ENCODE measurements at regions of chr11 and their contacts with region 1.

Region 1: DNA sequence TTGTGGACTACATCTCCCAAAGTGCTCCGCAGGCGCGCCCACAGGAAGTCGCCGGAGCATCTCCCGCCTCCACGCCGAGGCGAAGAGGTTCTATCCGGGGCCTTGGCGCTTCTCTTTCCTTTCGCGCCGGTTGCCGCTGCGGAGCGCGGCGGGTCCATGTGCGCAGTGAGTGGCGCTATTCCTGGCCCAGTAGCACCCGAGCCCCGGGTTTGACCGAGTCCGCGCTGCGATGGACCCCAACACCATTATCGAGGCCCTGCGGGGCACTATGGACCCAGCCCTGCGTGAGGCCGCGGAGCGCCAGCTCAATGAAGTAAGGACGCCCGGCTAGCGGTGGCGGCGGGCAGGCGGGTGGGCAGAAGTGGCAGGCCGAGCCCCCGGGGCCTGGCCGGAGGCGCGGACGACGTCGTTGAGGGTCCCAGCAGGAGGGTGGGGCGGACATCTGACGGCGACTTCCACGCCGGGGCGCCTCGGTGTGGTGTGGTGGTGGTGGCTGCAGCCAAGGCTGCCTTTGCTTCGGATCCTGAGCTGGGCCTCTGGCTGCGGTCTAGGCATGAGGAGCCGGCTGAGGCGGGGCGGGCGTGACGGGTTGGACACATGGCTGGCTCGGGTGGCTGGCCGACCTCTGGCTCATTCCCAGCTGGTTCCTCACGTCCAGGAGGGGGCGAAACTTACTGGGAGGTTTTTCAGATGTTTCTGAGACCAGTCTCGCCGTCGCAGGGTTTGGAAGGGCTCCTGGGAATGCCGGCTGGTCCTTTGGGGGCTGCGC is at the start of gene IPO7:
- DNase-seq: peak; percentile 70 to 95
- H3K4me3 ChIP-seq: peak within 1 kb of the TSS; percentile 86 to 97
- H3K27ac ChIP-seq: peak within 1 kb of the TSS; percentile 94 to 99
- H3K4me1 ChIP-seq: peaks cover 0 to 36% of the 10 kb centered on the region in 2 donors
- H3K27me3 ChIP-seq: no peaks in the 10 kb centered on the region
- CTCF ChIP-seq: peak; percentile 8 to 41 (median 38)
- total RNA-seq, gene IPO7: 93.4 TPM

Region 2: GRCh38 chr11:9120664-9121485 is 263.8 kb before region 1 on chr11:
- intact Hi-C with region 1: no loop called
- DNase-seq: no peak
- H3K4me3 ChIP-seq: no peak overlapping the region
- H3K27ac ChIP-seq: no peak overlapping the region
- H3K4me1 ChIP-seq: no peaks in the 10 kb centered on the region
- H3K27me3 ChIP-seq: no peaks in the 10 kb centered on the region
- CTCF ChIP-seq: no peak

Region 3: GRCh38 chr11:9314291-9315036 is 70.3 kb before region 1 on chr11 and contains the start of gene TMEM41B:
- intact Hi-C with region 1: loop called (anchors 1 kb)
- DNase-seq: peak; percentile 94 to 99
- H3K4me3 ChIP-seq: peak within 1 kb of the TSS; percentile 59 to 73
- H3K27ac ChIP-seq: peak within 1 kb of the TSS; percentile 77 to 88
- H3K4me1 ChIP-seq: peaks cover 0 to 9% of the 10 kb centered on the region in 2 donors
- H3K27me3 ChIP-seq: no peaks in the 10 kb centered on the region
- CTCF ChIP-seq: peak in 2 of 3 experiments; percentile 2 to 8
- total RNA-seq, gene TMEM41B: 26.7 TPM

Region 4: GRCh38 chr11:9688716-9689511 is 304.2 kb after region 1 on chr11:
- intact Hi-C with region 1: no loop called
- DNase-seq: no peak
- H3K4me3 ChIP-seq: peak overlapping the region in 1 of 2 donors; percentile 23
- H3K27ac ChIP-seq: peak overlapping the region; percentile 79 to 83
- H3K4me1 ChIP-seq: peaks cover 10 to 39% of the 10 kb centered on the region in 2 donors
- H3K27me3 ChIP-seq: no peaks in the 10 kb centered on the region
- CTCF ChIP-seq: no peak